Sigmoid colon (tissue), 7 donors: ENCODE measurements at regions of chr9 and their contacts with region 1.

Region 1: GRCh38 chr9:136527721-136528691 is 17.8 kb downstream of the NOTCH1 start:
- DNase-seq: no peak
- H3K4me3 ChIP-seq: no peak overlapping the region
- H3K27ac ChIP-seq: peak overlapping the region; percentile 59 to 84 (median 80)
- H3K4me1 ChIP-seq: peaks cover 0 to 94% (median 85%) of the 10 kb centered on the region in 4 donors
- H3K27me3 ChIP-seq: no peaks in the 10 kb centered on the region
- CTCF ChIP-seq: no peak
- EP300 ChIP-seq: no peak
- POLR2A ChIP-seq: no peak

Region 2: GRCh38 chr9:136455043-136456002 is 72.7 kb before region 1 on chr9:
- intact Hi-C with region 1: no loop called
- DNase-seq: no peak
- H3K4me3 ChIP-seq: no peak overlapping the region
- H3K27ac ChIP-seq: no peak overlapping the region
- H3K4me1 ChIP-seq: no peaks in the 10 kb centered on the region
- H3K27me3 ChIP-seq: no peaks in the 10 kb centered on the region
- CTCF ChIP-seq: no peak
- EP300 ChIP-seq: no peak
- POLR2A ChIP-seq: no peak

Region 3: DNA sequence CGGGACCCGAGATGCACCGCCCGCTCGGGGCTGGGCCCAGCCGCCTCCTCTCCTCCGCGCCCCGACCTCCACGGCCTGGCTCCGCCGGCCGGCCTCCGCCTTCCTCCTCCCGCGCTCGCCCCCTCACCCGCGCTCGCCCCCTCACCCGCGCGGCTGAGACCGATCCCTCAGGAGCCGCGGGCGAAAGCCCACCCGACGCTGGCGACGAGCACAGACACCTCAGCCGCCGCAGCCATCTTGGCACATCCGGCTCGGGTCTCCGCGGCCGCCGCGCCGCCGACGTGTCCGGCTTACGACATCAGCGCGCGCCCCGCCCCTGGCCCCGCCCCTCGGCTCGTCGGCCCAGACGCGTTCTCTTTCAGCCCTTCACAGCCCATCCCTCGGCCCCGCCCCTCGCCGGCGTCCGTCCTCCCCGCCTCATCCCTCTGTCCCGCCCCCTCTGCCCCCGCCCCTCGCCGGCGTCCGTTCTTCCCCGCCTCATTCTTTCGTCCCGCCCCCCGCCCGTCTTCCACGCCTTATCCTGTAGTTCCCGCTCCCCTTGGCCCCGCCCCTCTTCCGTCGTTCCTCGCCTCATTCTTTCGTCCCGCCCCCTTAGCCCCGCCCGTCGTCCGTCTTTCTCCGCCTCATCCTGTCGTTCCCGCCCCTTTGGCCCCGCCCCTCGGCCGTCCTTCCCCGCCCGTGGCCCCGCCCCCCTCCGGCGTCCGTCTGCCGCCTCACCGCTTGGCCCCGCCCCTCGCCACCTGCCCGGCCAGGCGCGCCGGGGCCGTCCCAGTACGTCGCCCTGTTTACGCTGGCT is 45.0 kb before region 1 on chr9 and contains the start of gene SEC16A:
- intact Hi-C with region 1: no loop called
- DNase-seq: peak; percentile 100
- H3K4me3 ChIP-seq: peak within 1 kb of the TSS; percentile 85 to 98 (median 92)
- H3K27ac ChIP-seq: peak within 1 kb of the TSS; percentile 99 to 100 (median 99)
- H3K4me1 ChIP-seq: peaks cover 0 to 25% (median 23%) of the 10 kb centered on the region in 4 donors
- H3K27me3 ChIP-seq: no peaks in the 10 kb centered on the region
- CTCF ChIP-seq: no peak
- EP300 ChIP-seq: no peak
- POLR2A ChIP-seq: peak; percentile 83
- total RNA-seq, gene SEC16A: 22.9 to 33.9 (median 30.2) TPM

Region 4: DNA sequence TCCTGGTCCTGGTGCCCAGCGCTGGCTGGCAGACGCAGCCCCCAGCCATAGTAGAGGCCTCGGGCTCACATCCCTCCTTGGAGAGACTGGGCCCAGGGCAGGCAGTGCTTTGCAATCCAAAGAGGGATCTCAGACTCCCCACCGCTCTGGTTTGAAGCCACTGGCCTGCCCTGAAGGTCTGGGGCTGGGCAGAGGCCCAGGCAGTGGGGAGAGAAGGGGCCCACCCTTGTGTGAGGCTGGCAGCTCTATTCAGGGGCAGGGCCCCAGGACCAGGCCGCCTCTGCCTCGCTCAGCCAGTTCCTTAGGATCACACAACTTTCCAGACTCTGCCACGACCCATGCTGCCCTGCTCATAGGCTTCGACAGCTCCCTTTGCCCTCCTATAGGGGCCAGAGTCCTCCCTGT is 34.4 kb before region 1 on chr9:
- intact Hi-C with region 1: loop called (anchors 5 kb)
- DNase-seq: no peak
- H3K4me3 ChIP-seq: no peak overlapping the region
- H3K27ac ChIP-seq: peak overlapping the region; percentile 5 to 61 (median 54)
- H3K4me1 ChIP-seq: peaks cover 0 to 30% (median 22%) of the 10 kb centered on the region in 4 donors
- H3K27me3 ChIP-seq: no peaks in the 10 kb centered on the region
- CTCF ChIP-seq: no peak
- EP300 ChIP-seq: no peak
- POLR2A ChIP-seq: no peak

Region 5: DNA sequence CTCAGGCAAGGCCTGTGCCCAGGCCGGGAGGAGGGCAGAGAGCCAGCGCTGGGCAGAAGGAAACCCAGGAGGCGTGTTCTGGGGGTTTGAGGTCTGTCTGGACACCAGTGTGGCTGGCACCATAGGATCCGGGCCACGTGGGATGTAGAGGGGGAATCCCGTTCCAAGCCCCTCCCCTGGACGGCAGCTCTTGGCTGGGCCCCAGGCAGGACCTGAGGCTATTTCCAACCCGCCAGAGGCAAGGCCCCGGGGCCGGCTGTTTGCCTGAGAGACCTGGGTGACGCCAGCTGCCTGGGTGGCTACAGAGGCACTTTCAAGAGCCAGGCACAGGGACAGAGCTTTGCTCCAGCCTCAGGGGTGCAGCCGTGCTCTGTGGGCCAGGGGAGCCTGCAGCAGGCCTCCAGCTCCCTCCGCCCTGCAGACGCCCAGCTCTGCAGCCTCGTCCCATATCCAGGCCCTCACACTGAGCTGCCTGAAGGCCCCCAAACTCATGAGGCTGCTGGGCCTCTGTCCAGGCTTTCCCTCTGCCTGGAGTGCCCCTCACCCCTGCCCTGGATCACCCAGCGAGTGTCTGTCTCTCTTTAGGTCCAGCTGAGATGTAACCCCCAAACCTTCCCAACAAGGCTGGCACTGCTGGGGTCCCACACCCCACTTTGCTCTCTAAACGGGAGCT is 78.1 kb after region 1 on chr9:
- intact Hi-C with region 1: loop called (anchors 5 kb)
- DNase-seq: peak; percentile 90
- H3K4me3 ChIP-seq: no peak overlapping the region
- H3K27ac ChIP-seq: peak overlapping the region; percentile 29 to 74 (median 68)
- H3K4me1 ChIP-seq: peaks cover 0 to 44% (median 27%) of the 10 kb centered on the region in 4 donors
- H3K27me3 ChIP-seq: peaks cover 0 to 13% (median 0%) of the 10 kb centered on the region in 3 donors
- CTCF ChIP-seq: no peak
- EP300 ChIP-seq: no peak
- POLR2A ChIP-seq: no peak